Endothelial cell of umbilical vein (primary cell): ENCODE measurements at regions of chr5 and their contacts with region 1.

Region 1: DNA sequence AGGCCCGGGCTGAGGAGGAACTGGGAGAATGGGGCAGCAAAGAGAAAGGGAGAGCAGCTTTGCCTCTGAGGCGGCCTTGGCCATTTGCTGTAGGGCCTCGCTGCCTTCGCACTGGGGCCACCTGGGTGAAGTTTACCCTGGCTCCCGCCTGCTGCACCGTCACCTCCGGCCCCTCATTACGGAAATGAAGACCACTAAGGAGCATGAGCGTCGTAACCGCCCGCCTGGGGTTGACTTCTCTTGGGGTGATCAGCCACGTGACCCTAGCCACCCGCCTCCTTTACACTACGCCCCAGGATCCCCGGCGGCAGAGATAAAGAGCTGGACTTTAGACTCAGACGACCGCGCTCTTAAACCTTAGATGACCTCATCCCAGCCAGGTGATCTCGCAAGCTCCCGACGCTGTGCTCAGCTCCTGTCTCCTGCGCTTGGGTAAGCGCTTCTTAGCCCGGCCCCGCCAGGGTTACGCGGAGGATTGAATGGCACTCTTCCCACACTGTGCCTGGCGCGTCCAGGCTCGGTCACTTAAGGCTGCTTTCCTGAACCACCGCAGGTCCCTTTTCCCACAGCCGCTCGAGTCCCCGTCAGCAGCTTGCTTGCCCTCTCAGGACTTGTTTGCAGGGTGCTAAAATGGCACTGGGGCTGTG is 107.9 kb upstream of the LARP1 start:
- DNase-seq: peak; percentile 19
- H3K4me3 ChIP-seq: peak overlapping the region; percentile 1 to 28 (median 9)
- H3K27ac ChIP-seq: no peak overlapping the region
- H3K4me1 ChIP-seq: peaks cover 6% of the 10 kb centered on the region
- H3K27me3 ChIP-seq: no peaks in the 10 kb centered on the region
- CTCF ChIP-seq: no peak
- POLR2A ChIP-seq: no peak

Region 2: GRCh38 chr5:154498591-154498990 is 148.6 kb before region 1 on chr5:
- CTCF ChIA-PET with region 1: no interaction called
- POLR2A ChIA-PET with region 1: no interaction called
- dilution Hi-C with region 1: no loop called
- intact Hi-C with region 1: no loop called
- DNase-seq: no peak
- H3K4me3 ChIP-seq: no peak overlapping the region
- H3K27ac ChIP-seq: no peak overlapping the region
- H3K4me1 ChIP-seq: no peaks in the 10 kb centered on the region
- H3K27me3 ChIP-seq: peaks cover 16 to 40% of the 10 kb centered on the region in 2 experiments
- CTCF ChIP-seq: no peak
- POLR2A ChIP-seq: no peak

Region 3: DNA sequence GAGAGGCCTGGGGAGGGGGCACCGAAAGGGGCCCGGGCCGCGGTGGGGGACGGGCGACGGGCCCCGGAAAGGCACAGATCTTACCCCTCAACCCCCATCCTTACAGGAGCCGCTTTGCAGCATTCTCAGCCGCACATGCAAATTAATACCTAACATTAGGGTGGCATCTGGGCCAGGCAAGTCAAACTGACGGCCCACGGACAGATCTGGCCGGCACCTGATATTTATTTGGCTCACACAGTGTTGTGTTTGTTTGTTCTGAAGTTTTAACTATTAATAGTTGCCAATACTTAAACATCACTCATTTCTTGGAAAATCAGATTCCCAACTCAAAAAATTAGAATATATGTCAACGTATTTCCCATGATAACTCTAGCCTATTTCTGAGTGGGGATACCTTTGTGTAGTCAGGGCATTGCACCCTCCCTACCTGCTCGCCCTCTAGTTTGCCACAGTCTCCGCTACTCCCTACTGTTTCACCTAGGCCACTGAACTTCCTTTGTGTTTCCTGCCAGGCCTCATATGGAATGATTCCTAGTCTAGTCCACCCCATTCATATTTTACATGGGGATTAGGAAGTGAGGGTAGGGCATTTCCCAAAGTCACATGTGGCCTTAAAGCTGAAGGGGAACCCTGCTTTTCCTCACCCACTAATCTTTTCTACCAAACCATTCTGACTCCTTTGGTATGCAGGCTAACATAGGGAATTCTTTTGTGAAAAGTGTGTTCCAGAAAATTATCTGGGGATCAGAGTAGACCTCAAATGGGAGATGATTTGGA is 36.1 kb after region 1 on chr5:
- CTCF ChIA-PET with region 1: no interaction called
- POLR2A ChIA-PET with region 1: no interaction called
- dilution Hi-C with region 1: no loop called
- intact Hi-C with region 1: loop called (anchors 1 kb)
- DNase-seq: no peak
- H3K4me3 ChIP-seq: peak overlapping the region in 1 of 3 experiments; percentile 53
- H3K27ac ChIP-seq: no peak overlapping the region
- H3K4me1 ChIP-seq: peaks cover 8% of the 10 kb centered on the region
- H3K27me3 ChIP-seq: no peaks in the 10 kb centered on the region
- CTCF ChIP-seq: no peak
- POLR2A ChIP-seq: no peak

Region 4: DNA sequence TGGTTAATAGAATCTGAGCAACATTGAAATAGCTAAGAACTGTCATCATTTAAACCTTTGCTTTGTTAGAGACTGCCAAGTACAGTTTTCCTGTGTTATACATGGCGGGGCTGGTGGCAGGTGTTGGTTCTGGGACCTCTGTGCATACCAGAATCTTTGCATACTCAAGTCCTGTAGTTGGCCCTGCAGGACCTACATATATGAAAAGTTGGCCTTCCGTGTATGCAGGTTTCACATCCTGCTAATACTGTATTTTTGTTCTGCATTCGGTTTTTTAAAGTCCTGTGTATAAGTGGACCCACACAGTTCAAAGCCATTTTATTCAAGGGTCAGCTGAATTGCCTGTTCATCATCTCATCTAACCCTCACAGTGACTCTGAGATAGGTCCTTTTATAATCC is 144.3 kb after region 1 on chr5:
- CTCF ChIA-PET with region 1: interaction called, 12 read pairs
- POLR2A ChIA-PET with region 1: no interaction called
- dilution Hi-C with region 1: no loop called
- intact Hi-C with region 1: no loop called
- DNase-seq: no peak
- H3K4me3 ChIP-seq: no peak overlapping the region
- H3K27ac ChIP-seq: no peak overlapping the region
- H3K4me1 ChIP-seq: peaks cover 20% of the 10 kb centered on the region
- H3K27me3 ChIP-seq: no peaks in the 10 kb centered on the region
- CTCF ChIP-seq: no peak
- POLR2A ChIP-seq: no peak

Region 5: GRCh38 chr5:154811653-154812365 is 164.6 kb after region 1 on chr5:
- CTCF ChIA-PET with region 1: interaction called, 8 read pairs
- POLR2A ChIA-PET with region 1: no interaction called
- dilution Hi-C with region 1: no loop called
- intact Hi-C with region 1: loop called (anchors 1 kb)
- DNase-seq: peak; percentile 77
- H3K4me3 ChIP-seq: no peak overlapping the region
- H3K27ac ChIP-seq: no peak overlapping the region
- H3K4me1 ChIP-seq: no peaks in the 10 kb centered on the region
- H3K27me3 ChIP-seq: no peaks in the 10 kb centered on the region
- CTCF ChIP-seq: peak; percentile 70 to 86
- POLR2A ChIP-seq: no peak

Region 6: GRCh38 chr5:154940772-154941620 is 293.8 kb after region 1 on chr5 and contains the start of gene MRPL22:
- CTCF ChIA-PET with region 1: no interaction called
- POLR2A ChIA-PET with region 1: no interaction called
- dilution Hi-C with region 1: no loop called
- intact Hi-C with region 1: loop called (anchors 1 kb)
- DNase-seq: peak; percentile 95
- H3K4me3 ChIP-seq: peak within 1 kb of the TSS; percentile 84 to 99 (median 91)
- H3K27ac ChIP-seq: peak within 1 kb of the TSS; percentile 81
- H3K4me1 ChIP-seq: peaks cover 56% of the 10 kb centered on the region
- H3K27me3 ChIP-seq: no peaks in the 10 kb centered on the region
- CTCF ChIP-seq: no peak
- POLR2A ChIP-seq: peak; percentile 86
- total RNA-seq, gene MRPL22: 90.8 and 112 TPM in 2 replicates

Region 7: DNA sequence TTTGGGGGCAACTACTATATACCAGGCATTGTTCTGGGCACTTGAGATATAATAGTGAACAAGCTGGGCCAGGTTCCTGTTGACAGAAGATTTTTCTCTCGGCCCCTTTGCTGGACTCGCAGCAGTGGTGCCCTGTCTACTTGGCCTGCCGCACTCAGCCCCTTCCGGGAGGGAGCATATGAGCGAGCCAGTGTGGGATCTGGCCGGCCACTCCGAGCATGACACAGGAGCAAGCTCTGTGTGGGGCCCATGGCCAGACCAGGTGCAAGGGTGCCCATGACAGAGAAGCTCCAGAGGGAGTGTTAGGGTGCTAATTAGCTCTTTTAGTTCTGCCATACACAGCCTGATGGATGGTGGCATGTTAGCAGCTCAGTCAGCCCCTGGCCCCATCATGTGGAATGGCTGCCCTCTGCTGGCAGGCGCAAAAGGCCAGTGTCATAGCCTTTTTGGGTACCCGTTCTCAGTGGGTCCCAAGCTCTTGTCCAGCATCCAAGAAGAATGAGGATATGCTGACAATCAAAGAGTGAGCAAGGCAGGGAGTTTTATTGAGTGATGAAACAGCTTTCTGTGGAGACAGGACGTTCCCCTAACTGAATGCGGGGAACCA is 357.0 kb after region 1 on chr5:
- CTCF ChIA-PET with region 1: interaction called, 3 read pairs
- POLR2A ChIA-PET with region 1: no interaction called
- dilution Hi-C with region 1: no loop called
- intact Hi-C with region 1: loop called (anchors 2 kb)
- DNase-seq: peak; percentile 56
- H3K4me3 ChIP-seq: no peak overlapping the region
- H3K27ac ChIP-seq: no peak overlapping the region
- H3K4me1 ChIP-seq: peaks cover 4% of the 10 kb centered on the region
- H3K27me3 ChIP-seq: no peaks in the 10 kb centered on the region
- CTCF ChIP-seq: peak; percentile 60 to 73
- POLR2A ChIP-seq: no peak